Endothelial cell of umbilical vein (primary cell): ENCODE measurements at regions of chr2 and their contacts with region 1.

Region 1: DNA sequence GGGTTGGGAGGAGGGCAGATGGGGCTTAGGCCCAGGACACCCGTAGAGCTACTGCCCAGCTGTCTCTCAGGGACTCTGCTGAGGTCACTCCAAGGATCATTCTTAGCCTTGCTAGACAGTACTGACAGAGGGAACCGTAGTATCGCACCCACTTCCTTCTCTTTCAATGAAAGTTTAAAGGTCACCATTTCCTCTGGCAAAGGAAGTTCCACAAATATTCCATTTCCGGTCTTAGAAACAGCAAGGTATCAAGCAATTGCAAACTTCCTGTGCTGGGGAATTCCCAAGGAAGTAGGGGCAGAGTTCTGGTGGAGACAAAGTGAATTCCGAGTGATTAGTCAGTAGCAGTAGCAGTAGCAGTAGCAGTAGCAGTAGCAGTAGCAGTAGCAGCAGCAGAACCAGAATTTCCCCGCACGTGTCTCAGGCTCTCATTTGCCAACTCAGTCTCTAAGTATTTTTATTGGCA is 24.7 kb downstream of the IL1B start:
- DNase-seq: peak; percentile 99
- H3K4me3 ChIP-seq: no peak overlapping the region
- H3K27ac ChIP-seq: peak overlapping the region; percentile 97
- H3K4me1 ChIP-seq: peaks cover 27% of the 10 kb centered on the region
- H3K27me3 ChIP-seq: no peaks in the 10 kb centered on the region
- CTCF ChIP-seq: no peak
- POLR2A ChIP-seq: peak; percentile 83

Region 2: DNA sequence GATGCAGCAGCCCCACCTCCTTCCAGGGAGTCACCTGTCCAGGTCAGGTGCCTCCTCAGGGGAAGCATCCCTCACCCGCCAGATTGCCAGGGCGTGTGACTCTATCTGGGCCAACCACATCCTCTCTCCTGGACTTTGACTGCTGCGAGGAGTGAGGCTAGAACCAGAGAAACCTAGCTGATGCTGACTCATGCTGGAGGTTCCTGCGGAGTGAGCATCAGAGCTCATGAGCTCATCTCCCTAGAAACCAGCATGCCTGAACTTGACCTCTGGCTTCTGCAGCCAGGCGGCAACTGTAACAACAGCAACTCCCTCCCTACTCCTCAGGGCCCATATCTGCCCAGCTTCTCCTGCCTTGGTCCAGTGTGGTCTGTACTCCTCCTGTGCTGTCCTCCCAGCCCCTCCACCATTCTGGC is 119.4 kb before region 1 on chr2:
- CTCF ChIA-PET with region 1: no interaction called
- POLR2A ChIA-PET with region 1: no interaction called
- dilution Hi-C with region 1: no loop called
- intact Hi-C with region 1: loop called (anchors 5 kb)
- DNase-seq: peak; percentile 73
- H3K4me3 ChIP-seq: no peak overlapping the region
- H3K27ac ChIP-seq: peak overlapping the region; percentile 72
- H3K4me1 ChIP-seq: peaks cover 41% of the 10 kb centered on the region
- H3K27me3 ChIP-seq: no peaks in the 10 kb centered on the region
- CTCF ChIP-seq: no peak
- POLR2A ChIP-seq: no peak

Region 3: GRCh38 chr2:112764071-112765044 is 47.5 kb before region 1 on chr2 and contains the start of gene CKAP2L:
- CTCF ChIA-PET with region 1: interaction called, 3 read pairs
- POLR2A ChIA-PET with region 1: interaction called, 4 read pairs
- dilution Hi-C with region 1: no loop called
- intact Hi-C with region 1: loop called (anchors 1 kb)
- DNase-seq: peak; percentile 98
- H3K4me3 ChIP-seq: peak within 1 kb of the TSS; percentile 78 to 90 (median 87)
- H3K27ac ChIP-seq: peak within 1 kb of the TSS; percentile 34
- H3K4me1 ChIP-seq: peaks cover 21% of the 10 kb centered on the region
- H3K27me3 ChIP-seq: no peaks in the 10 kb centered on the region
- CTCF ChIP-seq: no peak
- POLR2A ChIP-seq: peak; percentile 52
- total RNA-seq, gene CKAP2L: 25.2 and 30.7 TPM in 2 replicates

Region 4: DNA sequence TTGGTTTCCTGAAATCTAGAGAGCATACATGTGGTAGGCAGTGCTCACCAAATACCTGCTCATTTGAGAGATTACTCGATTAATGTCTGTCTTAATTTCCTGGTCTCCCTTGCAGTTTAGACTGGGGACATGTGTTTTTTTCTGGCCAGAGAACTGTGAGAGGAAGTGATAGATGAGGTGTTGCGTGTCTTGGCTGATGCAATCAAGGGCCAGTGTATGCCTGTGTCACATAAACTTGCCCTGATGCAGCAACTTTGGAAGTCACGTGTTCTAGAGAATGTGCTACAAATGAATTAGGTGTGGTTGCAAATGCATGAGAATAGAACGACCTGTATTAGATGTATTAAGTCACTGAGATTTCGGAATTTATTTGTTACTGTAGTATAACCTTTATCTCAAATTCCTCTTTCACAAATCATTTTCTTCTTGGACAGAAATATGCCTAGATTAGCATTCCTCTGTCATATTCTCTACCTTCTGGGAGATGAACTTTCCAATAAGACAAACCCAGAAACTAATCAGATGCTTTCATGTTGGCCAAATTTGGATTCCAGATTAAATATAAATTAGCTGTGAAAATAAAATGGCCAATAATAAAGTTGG is 17.6 kb before region 1 on chr2:
- CTCF ChIA-PET with region 1: interaction called, 3 read pairs
- POLR2A ChIA-PET with region 1: interaction called, 3 read pairs
- dilution Hi-C with region 1: no loop called
- intact Hi-C with region 1: loop called (anchors 1 kb)
- DNase-seq: peak; percentile 64
- H3K4me3 ChIP-seq: no peak overlapping the region
- H3K27ac ChIP-seq: peak overlapping the region; percentile 78
- H3K4me1 ChIP-seq: peaks cover 16% of the 10 kb centered on the region
- H3K27me3 ChIP-seq: no peaks in the 10 kb centered on the region
- CTCF ChIP-seq: no peak
- POLR2A ChIP-seq: no peak

Region 5: DNA sequence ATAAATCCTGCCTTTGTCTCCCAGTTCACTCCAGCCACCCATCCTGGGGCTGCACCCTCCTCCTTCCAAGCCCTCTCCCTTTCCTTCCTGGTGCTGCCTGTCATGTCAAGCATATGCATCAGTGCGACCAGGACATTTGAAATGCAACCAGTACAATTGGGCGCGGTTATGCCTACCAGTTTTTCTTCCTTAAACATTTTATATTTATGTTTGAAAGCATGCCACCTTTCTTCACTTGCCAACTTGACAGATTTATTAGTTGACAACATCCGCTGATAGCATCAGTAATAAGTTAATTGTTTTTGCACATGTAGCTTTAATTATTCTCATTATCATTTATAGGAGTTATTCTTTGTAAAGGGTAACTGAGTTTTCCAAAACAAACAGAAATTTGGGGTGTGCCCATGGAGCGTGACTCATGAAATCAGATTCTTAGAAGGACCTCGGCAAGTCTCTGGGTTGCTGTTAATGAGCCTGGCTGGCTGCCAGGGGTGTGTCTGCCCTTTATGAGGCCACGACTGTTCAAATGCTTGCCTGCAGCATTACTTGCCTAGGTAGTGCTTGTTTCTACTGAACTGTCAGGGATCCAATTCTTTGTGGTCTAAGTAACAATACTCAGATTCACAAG is 57.5 kb after region 1 on chr2:
- CTCF ChIA-PET with region 1: no interaction called
- POLR2A ChIA-PET with region 1: no interaction called
- dilution Hi-C with region 1: no loop called
- intact Hi-C with region 1: loop called (anchors 1 kb)
- DNase-seq: peak; percentile 64
- H3K4me3 ChIP-seq: no peak overlapping the region
- H3K27ac ChIP-seq: no peak overlapping the region
- H3K4me1 ChIP-seq: peaks cover 12% of the 10 kb centered on the region
- H3K27me3 ChIP-seq: peaks cover 5 to 9% of the 10 kb centered on the region in 2 experiments
- CTCF ChIP-seq: no peak
- POLR2A ChIP-seq: no peak